Posterior vena cava (tissue), 2 donors: ENCODE measurements at regions of chr5 and their contacts with region 1.

Region 1: DNA sequence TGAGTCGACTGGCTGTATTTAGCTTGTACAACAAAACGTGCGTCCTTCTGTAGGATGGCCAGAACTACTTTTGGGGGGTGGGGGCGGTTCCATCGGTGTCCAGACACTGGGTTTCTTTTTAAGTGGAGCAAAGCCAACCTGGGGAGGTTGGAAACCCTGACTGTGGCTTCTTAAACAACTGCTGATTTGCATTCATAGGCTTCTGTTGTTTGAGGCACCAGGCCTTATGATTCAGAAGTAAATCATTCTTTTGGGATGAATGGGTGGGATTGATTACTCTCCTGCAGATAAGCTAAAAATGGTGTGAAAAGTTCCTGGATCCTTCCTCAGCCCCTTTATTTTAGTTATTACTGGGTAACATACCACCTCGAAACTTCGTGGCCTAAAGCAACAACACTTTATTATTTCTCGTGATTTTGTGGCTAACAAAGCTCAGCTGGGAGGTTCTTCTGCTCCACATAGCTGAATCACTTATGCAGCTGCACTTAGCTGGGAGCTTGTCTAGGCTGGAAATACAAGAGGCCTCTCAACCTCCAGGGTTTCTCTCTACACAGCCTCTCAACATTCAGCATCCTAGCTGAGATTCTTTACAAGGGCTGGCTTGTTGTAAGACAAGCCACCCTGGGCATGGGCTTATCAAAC is 12.2 kb upstream of the SMIM32 start:
- DNase-seq: peak; percentile 66

Region 2: GRCh38 chr5:135887351-135887864 is 317.8 kb before region 1 on chr5:
- intact Hi-C with region 1: loop called (anchors 5 kb)
- DNase-seq: no peak

Region 3: DNA sequence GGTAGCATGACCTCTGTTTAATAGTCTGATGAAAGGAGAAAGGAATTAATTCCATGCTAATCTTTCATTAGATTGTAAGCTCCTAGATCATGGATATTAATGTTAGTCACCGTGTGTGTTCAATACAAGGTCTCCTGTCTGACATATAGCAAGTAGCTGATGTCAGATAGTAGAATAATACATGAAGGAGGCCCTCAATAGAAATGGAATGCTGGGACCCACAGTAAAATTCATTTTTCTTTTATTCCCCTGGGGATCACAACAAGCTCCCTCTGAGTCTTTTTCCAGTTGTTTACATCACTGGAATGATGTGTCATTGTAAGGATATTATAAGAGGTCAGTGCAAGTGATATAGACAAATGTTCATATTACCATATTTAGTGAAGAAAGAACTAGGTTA is 400.5 kb after region 1 on chr5:
- intact Hi-C with region 1: no loop called
- DNase-seq: no peak